KBM-7 (cell line): ENCODE measurements at regions of chr9 and their contacts with region 1.

Region 1: DNA sequence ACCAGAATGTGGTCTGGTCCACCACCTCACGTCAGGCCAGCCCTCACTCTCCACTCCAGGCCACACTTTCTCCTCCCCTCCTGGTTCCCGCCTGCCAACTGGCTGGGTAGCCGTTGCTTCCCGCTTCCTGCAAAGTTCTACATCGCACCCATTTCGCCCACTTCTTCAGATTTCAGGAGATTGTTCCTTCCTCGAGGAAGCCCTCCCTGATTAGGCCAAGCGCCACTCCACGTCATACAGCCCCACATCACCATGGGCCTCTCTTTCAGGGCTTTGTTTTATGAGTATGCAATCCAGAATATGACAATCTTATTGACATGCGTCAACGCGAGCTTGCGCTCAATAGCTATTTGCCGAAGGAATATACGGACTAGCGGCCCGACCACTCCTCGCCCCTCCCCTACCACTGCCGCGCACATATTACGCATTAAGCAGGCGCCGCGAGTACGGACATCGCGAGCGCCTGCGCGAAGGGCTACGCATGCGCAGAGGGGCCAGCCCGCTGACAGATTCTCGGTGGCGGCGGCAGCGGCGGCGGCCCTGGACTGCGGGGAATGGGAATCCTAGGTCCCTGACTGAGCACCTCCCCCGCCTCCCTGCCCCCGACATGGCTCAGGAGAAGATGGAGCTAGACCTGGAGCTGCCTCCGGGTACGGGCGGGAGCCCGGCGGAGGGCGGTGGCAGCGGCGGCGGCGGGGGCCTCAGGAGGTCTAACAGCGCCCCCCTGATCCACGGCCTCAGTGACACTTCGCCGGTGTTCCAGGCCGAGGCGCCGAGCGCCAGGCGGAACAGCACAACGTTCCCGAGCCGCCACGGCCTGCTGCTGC is 74.7 kb downstream of the PIP5K1B start:
- DNase-seq: peak; percentile 92

Region 2: DNA sequence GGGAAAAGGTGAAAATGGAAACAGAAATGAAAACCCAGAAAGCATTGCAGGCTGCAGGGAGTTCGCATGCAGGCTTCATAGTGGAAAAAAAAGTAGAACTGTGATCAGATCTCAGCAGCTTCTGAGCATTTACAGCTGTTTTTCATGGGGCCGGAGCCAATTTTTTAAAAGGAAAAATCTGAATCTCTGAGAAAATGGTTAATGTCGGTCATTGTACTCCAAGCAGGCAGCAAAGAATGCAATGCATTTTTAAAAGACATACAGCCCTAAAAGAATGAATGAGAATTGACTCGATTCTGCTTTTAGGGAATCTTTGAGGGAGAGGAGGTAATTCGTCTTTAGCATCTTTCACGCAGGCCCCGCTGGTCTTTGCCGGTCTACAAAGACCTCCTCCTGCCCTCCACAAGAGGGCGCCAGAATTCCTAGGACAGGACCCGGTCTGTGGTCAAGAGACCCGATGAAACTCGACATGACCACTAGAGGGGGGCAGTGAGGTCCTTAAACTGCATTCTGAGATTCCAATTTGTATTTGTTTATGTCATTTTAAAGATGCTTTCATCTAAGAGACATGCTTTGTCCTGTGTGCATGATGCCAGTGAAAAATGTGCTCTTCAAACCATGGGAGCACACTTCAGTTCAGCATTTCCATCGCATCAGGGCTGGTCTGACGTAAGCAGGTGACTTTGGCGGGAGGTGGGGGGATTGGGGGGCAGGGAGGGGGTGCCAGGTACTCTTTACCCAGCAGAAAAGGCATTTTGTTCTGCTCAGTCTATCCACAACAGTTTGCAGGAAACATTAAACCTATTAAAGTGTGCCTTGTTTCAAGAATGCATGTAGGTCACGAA is 195.4 kb before region 1 on chr9:
- in situ Hi-C with region 1: loop called (anchors 25 kb)
- DNase-seq: peak; percentile 73

Region 3: DNA sequence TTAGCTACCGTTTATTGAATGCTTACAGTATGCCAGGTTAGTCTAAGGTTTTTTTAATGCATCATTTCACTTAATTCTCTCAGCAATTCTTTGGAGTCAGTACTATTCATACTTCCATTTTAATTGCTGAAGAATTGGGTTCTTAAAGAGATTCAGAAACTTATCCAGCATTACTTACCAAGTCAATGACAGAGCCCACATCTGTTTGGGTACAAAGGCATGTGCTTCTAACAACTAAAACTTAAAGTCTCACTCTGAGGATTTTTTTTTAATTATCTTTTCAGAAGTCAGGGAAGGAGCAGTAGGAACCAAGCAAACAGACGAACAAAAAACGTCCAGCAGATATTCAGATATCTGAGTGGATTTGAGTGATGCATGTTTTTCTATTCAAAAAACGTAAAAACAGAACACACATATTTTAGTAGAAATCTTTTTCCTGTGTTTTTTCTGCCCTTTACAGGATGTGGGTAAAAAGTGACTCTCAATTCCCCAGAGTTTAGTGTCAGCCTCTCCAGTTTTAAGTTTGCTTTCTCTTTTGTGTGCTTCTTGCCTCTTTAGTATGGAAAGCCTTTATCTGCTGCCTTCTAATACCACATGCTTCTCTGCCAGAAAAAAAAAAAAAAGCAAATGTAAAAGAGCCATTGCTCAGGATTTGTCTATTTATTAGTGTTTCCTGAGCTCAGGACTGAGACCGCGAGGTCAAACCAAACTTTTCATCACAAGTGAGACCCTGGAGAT is 116.1 kb after region 1 on chr9:
- in situ Hi-C with region 1: loop called (anchors 25 kb)
- DNase-seq: no peak